Sigmoid colon (tissue), 7 donors: ENCODE measurements at regions of chr11 and their contacts with region 1.

Region 1: GRCh38 chr11:65354265-65355012 is at the start of gene TIGD3:
- DNase-seq: peak; percentile 99
- H3K4me3 ChIP-seq: peak within 1 kb of the TSS; percentile 37 to 79 (median 74)
- H3K27ac ChIP-seq: peak within 1 kb of the TSS; percentile 72 to 79 (median 78)
- H3K4me1 ChIP-seq: peaks cover 0 to 27% (median 23%) of the 10 kb centered on the region in 4 donors
- H3K27me3 ChIP-seq: peaks cover 0 to 17% (median 11%) of the 10 kb centered on the region in 3 donors
- CTCF ChIP-seq: no peak
- EP300 ChIP-seq: no peak
- POLR2A ChIP-seq: no peak
- total RNA-seq, gene TIGD3: 0.14 to 0.36 (median 0.33) TPM in 3 of 4 donors, not detected in the other

Region 2: GRCh38 chr11:65003282-65003681 is 351.2 kb before region 1 on chr11:
- intact Hi-C with region 1: no loop called
- DNase-seq: no peak
- H3K4me3 ChIP-seq: no peak overlapping the region
- H3K27ac ChIP-seq: no peak overlapping the region
- H3K4me1 ChIP-seq: no peaks in the 10 kb centered on the region
- H3K27me3 ChIP-seq: no peaks in the 10 kb centered on the region
- CTCF ChIP-seq: no peak
- EP300 ChIP-seq: no peak
- POLR2A ChIP-seq: no peak

Region 3: DNA sequence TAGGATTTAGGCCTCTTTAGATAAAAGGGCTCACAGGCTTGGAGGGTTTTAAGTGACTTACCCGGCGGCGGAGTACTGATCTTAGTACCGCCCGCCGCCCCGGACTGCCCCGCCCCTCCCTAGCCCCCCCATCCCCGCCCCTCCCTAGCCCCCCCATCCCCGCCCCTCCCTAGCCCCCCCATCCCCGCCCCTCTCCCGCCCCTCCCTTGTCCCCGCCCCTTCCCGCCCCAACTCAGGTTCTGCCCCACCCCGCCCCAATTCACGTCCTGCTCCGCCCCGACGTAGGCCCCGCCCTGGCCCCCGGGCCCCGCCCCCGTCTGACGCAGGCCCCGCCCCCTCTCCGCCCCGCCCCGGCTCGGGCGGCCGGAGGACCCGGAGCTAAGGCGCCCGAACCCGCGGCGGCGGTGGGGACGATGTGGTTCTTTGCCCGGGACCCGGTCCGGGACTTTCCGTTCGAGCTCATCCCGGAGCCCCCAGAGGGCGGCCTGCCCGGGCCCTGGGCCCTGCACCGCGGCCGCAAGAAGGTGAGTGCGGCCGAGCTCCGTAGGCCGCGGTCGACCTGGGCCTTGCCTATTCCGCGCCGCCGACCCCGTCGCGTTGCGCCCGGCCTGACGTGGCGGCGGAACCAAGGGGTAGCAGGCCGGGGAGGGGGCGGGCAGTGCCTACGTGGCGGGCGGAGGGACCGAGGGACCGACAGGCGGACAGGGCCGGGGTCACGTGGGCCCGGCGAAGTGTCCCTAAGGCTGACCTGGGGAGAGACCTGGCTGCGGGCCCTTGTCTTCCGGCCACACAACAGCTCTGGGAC is 170.5 kb after region 1 on chr11 and contains the start of gene SCYL1:
- intact Hi-C with region 1: loop called (anchors 5 kb)
- DNase-seq: peak; percentile 93
- H3K4me3 ChIP-seq: peak within 1 kb of the TSS; percentile 88 to 100 (median 92)
- H3K27ac ChIP-seq: peak within 1 kb of the TSS; percentile 91 to 97 (median 94)
- H3K4me1 ChIP-seq: peaks cover 0 to 29% (median 25%) of the 10 kb centered on the region in 4 donors
- H3K27me3 ChIP-seq: no peaks in the 10 kb centered on the region
- CTCF ChIP-seq: no peak
- EP300 ChIP-seq: no peak
- POLR2A ChIP-seq: peak; percentile 49 to 61
- total RNA-seq, gene SCYL1: 67.1 to 100 (median 77.7) TPM